Endothelial cell of umbilical vein (primary cell): ENCODE measurements at regions of chrX and their contacts with region 1.

Region 1: DNA sequence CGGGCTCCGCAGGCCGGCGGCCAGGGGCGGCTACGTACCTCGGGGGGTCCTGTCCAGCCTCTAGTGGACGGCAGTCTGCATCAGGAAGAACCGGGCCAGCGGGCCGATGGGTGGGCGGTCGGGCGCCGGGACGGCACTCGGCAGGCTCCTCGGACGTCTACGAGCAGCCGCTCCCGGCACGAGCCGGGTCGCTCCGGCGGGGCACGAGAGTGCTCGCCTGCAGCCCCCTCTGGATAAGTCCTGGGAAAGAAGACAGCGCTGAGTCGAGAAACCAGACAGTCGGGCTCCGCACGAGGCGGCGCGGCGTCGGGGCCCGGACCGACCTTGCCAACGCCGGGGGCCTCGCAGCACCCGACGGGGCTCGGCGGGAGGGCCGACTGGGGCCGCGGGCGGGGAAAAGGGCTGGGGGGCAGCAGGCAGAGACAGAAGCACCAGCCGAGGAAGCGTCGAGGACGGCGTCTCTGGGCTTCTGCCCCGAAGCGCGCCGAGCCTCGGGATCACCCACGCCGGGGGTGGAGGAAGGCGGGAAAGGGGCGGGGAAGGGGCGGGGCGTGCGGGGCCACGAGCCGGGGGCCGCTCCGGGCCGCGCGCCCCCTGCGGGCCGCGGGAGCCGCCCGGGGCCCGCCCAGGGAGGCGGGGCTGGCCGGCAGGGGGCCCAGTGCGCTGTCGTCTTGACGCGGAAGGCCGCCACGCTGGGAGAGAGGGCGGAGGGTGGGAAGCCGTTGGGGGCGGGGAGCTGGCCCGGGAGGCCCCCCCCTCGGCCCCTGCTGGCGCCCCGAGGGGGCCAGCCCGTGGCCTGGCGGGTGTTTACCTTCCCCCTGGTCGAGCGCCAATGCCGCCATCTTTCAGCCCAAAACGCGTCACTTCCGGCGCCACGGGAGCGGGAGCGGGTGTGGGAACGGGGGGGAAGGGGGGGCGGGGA is 1.9 kb downstream of the KLHL15 start:
- DNase-seq: peak; percentile 86
- H3K4me3 ChIP-seq: peak overlapping the region; percentile 81 to 93 (median 86)
- H3K27ac ChIP-seq: peak overlapping the region; percentile 90
- H3K4me1 ChIP-seq: peaks cover 8% of the 10 kb centered on the region
- H3K27me3 ChIP-seq: no peaks in the 10 kb centered on the region
- CTCF ChIP-seq: peak in 1 of 2 donors; percentile 20
- POLR2A ChIP-seq: peak; percentile 81

Region 2: DNA sequence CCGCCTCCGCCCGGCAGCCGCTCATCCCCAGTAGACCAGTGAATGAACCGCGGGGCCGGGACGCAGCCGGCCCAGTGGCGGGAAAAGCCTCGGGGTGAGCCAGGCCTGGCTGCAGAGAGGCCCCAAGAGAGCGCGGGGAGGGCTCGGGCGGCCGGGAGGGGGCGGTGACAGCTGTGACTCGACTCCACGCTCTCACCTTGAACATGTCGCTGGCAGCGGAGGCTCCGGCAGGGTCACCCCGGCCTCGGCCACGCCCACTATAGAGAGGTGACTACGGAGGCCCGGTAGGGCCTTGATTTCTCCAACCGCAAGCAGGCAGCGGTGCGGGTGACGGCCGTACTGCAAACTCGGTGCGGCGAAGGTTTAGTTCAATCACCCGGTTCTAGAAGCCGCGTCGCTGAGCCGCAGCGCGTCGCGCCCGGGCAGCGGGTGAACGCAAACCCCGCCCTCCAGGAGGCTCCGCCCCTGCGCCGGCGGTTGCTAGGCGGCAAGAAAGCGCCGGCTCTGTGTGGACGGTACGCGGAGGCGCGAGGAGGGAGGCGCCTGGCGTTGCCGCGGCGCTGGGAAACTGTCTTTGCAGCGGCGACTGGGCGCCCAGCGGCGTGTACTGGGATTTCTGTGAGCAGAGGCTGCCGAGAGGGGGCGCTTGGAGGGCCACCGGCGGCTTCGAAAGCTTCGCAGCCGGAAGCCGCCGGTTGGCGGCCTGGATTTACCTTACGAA is 117.4 kb before region 1 on chrX and contains the starts of genes APOO and CXorf58:
- CTCF ChIA-PET with region 1: no interaction called
- POLR2A ChIA-PET with region 1: no interaction called
- dilution Hi-C with region 1: no loop called
- intact Hi-C with region 1: loop called (anchors 1 kb)
- DNase-seq: peak; percentile 91
- H3K4me3 ChIP-seq: peak within 1 kb of the TSS; percentile 51 to 82 (median 72)
- H3K27ac ChIP-seq: peak within 1 kb of the TSS; percentile 68
- H3K4me1 ChIP-seq: peaks cover 5% of the 10 kb centered on the region
- H3K27me3 ChIP-seq: no peaks in the 10 kb centered on the region
- CTCF ChIP-seq: peak; percentile 71 to 83
- POLR2A ChIP-seq: peak; percentile 39
- total RNA-seq, gene APOO: 20.9 and 24.3 TPM in 2 replicates
- total RNA-seq, gene CXorf58: not detected in 2 replicates

Region 3: DNA sequence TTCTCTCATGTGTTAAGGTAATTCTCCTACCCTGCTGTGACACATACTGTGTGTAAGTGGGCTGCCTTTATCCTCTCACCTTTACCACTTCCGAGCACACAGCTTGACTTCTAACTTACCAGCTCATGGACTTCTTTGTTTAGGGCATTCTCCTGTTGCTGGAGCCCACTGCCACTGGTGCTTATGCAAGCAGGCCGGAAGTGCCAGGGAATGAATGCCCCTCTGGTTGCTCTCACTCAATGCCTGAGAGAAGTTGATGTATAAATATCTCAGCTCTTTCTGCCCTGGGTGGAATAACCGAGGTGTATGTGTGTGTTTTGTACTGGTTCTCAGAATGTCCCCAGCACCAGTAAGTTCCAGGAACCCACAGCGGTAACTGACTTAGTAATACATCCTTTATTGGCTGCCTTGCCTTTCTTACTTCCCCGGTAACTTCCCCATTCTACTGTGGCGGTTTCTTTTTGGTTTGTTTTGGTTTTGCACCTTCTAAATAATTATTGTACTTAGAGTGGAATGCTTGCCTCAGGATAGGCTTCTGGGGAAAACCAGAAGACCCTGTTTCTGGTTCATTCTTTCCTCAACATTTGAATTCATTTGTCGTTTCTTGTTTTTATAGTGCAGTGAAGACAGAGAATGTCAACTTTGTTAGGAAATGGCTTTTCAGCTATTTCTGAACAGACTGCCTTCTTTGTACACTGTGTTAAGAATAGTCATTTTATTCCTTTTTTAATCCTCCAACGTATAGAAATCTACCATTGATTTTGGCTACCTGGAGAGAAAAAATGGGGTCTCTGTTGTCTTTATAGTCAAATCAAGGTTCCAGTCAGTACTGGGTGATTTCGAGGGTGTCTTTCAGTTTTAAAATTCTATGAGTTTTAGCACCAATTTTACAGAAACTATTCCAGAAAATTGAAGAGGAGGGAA is 71.8 kb before region 1 on chrX:
- CTCF ChIA-PET with region 1: no interaction called
- POLR2A ChIA-PET with region 1: no interaction called
- dilution Hi-C with region 1: no loop called
- intact Hi-C with region 1: loop called (anchors 2 kb)
- DNase-seq: peak; percentile 4
- H3K4me3 ChIP-seq: no peak overlapping the region
- H3K27ac ChIP-seq: peak overlapping the region; percentile 7
- H3K4me1 ChIP-seq: peaks cover 18% of the 10 kb centered on the region
- H3K27me3 ChIP-seq: no peaks in the 10 kb centered on the region
- CTCF ChIP-seq: no peak
- POLR2A ChIP-seq: no peak

Region 4: GRCh38 chrX:23993012-23993633 is 32.0 kb before region 1 on chrX:
- CTCF ChIA-PET with region 1: no interaction called
- POLR2A ChIA-PET with region 1: no interaction called
- dilution Hi-C with region 1: no loop called
- intact Hi-C with region 1: loop called (anchors 2 kb)
- DNase-seq: peak; percentile 71
- H3K4me3 ChIP-seq: no peak overlapping the region
- H3K27ac ChIP-seq: peak overlapping the region; percentile 24
- H3K4me1 ChIP-seq: peaks cover 7% of the 10 kb centered on the region
- H3K27me3 ChIP-seq: no peaks in the 10 kb centered on the region
- CTCF ChIP-seq: no peak
- POLR2A ChIP-seq: no peak